Sciatic nerve (tissue), 2 donors: ENCODE measurements at regions of chr19 and their contacts with region 1.

Region 1: DNA sequence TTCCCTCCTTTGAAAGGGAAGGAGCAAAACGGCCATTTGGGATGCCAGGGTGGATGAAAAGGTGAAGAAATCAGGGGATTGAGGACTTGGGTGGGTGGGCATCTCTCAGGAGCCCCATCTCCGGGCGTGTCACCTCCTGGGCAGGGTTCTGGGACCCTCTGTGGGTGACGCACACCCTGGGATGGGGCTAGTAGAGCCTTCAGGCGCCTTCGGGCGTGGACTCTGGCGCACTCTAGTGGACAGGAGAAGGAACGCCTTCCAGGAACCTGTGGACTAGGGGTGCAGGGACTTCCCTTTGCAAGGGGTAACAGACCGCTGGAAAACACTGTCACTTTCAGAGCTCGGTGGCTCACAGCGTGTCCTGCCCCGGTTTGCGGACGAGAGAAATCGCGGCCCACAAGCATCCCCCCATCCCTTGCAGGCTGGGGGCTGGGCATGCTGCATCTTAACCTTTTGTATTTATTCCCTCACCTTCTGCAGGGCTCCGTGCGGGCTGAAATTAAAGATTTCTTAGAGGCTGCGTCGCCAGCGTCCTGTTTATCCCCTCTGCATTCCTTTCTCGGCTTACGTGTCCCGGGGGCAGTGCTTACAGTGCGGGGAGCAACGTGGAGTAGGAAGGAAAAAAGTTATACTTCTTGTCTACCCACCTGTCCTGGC is 15.2 kb upstream of the S1PR4 start:
- DNase-seq: peak; percentile 84
- ATAC-seq: peak; percentile 91

Region 2: DNA sequence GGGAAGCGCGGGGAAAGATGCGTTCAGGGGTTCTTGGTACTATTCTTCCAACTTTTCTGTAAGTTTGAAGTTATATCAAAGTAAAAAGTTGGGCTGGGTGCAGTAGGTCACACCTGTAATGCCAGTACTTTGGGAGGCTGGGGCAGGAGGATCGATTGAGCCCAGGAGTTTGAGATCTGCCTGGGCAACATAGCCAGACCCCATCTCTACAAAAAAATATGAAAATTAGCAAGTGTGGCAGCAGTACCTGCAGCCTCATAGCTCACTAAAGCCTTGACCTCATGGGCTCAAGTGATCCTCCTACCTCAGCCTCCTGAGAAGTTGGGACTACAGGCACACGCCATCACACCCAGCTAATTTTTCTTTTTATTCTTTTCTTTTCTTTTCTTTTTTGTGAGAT is 206.2 kb before region 1 on chr19:
- intact Hi-C with region 1: loop called (anchors 5 kb)
- DNase-seq: no peak
- ATAC-seq: no peak

Region 3: DNA sequence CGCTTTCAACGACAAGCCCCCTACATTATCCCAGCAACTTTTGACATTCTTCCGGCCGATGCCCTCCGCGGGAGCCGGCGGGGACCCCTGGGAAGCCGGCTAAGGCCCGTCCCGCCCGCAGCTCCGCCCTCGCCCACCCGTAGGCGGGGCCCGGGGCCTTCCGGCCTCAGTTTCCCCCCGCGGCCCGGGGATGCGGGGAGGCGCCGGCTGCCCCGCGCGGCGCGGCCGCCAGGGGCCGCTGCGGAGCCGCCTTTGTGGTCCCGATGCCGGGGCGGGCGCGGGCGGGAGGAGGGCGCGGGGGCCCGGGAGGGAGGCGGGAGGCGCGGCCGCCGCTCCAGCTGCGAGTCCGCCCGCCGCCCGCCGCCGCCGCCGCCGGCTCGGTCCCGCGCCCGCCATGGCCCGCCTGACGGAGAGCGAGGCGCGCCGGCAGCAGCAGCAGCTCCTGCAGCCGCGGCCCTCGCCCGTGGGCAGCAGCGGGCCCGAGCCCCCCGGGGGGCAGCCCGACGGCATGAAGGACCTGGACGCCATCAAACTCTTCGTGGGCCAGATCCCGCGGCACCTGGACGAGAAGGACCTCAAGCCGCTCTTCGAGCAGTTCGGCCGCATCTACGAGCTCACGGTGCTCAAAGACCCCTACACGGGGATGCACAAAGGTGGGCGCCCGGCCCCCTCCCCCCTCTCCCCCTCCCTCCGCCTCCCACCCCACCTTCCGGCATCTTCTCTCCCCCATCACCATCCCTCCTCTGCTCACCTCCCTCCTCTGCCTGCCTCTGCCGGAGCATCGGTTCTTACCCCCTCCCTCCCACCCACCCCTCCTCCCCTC is 61.2 kb after region 1 on chr19 and contains the start of gene CELF5:
- intact Hi-C with region 1: no loop called
- DNase-seq: no peak
- ATAC-seq: no peak
- total RNA-seq, gene CELF5: 0.18 TPM